ENCODE measurements at regions of chr20 and their contacts with region 1.

Region 1: DNA sequence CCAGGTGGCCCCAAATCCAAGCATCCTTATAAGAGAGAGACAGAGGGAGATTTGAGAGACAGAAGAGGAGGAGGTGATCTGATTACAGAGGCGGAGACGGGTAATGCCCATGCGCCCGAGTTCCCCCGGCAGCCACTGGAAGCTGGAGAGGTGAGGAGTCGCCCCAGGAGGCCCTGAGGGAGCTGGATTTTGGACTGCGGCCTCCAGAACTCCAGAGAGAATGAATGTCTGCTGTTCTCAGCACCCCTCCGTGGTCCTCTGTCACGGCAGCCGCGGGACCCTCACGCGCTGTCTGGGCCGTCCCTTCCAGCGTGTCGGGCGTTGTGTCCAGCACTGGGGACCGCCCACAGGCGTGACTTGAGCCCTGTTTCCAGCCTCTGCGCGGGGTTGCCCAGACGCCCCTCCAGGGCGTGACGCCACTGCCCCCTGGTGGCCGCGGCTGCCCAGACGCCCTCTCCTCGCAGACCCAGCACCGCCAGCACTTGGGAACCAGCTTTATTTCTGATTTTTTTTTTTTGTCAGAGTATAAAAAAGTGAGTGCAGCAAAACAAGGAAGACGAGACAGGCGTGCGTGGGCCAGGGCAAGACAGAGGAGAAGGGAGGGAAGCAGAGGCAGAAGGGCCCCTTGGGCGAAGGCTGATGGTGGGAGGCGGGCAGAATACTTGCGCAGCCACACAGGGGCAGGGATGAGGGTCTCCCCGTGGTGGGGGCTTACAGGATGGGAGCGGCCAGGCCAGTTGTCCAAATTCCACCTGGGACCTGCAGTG is 4.1 kb upstream of the ZNF512B start:
- DNase-seq: peak; percentile 89 to 90
- H3K4me3 ChIP-seq: no peak overlapping the region
- H3K27ac ChIP-seq: no peak overlapping the region
- H3K4me1 ChIP-seq: peaks cover 10 to 23% of the 10 kb centered on the region in 2 donors
- H3K27me3 ChIP-seq: no peaks in the 10 kb centered on the region
- CTCF ChIP-seq: peak; percentile 88 to 99 (median 98)
- POLR2A ChIP-seq: no peak

Region 2: GRCh38 chr20:63495741-63496595 is 477.9 kb before region 1 on chr20:
- intact Hi-C with region 1: loop called (anchors 5 kb)
- DNase-seq: peak; percentile 51 to 59
- H3K4me3 ChIP-seq: peak overlapping the region in 1 of 3 donors; percentile 13
- H3K27ac ChIP-seq: no peak overlapping the region
- H3K4me1 ChIP-seq: peaks cover 0 to 16% of the 10 kb centered on the region in 2 donors
- H3K27me3 ChIP-seq: peaks cover 7% of the 10 kb centered on the region
- CTCF ChIP-seq: peak; percentile 59 to 94 (median 72)
- POLR2A ChIP-seq: no peak

Region 3: DNA sequence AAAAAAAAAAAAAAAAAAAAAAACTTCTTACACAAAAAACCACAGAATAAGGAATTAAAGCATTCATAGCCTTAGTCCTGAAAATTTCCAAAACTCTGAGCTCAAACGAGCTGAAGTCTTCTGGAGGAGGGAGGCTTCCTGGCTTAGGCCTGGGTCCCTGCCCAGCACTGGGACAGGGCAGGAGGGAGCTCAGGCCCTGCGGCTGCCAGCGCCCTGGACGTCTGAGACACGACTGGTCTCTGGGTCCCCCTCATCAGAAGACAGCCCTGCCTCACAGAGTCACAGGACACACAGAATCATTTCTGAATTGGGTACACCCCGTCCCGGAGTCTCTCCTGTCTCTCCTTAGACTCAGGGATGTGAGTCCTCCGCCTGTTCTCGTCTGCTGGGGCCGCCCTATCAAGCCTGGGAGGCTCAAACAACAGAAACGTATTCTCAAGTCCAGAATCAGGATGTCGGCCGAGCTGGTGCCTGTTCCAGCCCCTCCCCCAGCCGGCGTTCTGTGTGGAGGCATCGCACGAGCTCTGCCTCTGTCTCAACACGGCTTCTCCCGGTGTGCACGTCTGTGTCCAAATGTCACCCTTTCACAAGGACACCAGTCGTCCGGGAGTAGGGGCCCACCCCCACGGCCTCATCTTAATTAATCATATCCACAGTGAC is 182.2 kb before region 1 on chr20:
- intact Hi-C with region 1: no loop called
- DNase-seq: no peak
- H3K4me3 ChIP-seq: no peak overlapping the region
- H3K27ac ChIP-seq: peak overlapping the region in 1 of 3 donors; percentile 1
- H3K4me1 ChIP-seq: peaks cover 0 to 4% of the 10 kb centered on the region in 2 donors
- H3K27me3 ChIP-seq: no peaks in the 10 kb centered on the region
- CTCF ChIP-seq: no peak
- POLR2A ChIP-seq: no peak